ENCODE measurements at regions of chr20 and their contacts with region 1.

Region 1: DNA sequence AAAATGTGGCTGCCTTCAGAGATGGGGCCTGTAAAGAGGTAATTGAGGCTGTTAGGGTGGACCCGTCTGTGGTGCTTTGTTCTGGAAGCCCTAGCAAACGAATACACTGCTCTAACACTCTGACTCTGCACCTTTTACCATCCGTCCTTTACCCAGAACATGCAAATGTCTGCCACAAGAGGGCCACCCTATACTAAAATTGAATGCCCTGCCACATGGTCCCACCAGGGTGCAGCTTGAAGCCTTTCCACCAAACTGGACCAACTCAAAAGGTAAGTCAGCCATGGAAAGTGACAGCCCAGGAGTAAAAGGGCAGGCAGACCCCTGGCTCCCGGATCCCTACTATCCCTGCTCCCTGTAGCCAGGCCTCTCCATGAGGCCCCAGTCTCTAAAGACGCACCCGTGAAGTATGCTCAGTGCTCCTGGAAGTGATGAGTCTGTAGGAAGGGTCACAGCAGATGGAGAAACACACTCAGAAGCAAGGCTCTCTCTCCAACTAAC is 5.8 kb upstream of the BFSP1 start:
- DNase-seq: peak; percentile 83
- H3K4me3 Mint-ChIP-seq: no peak overlapping the region
- H3K27ac Mint-ChIP-seq: no peak overlapping the region
- H3K4me1 Mint-ChIP-seq: peaks cover 20% of the 10 kb centered on the region
- H3K27me3 Mint-ChIP-seq: no peaks in the 10 kb centered on the region
- CTCF ChIP-seq: peak; percentile 84

Region 2: GRCh38 chr20:17558154-17558940 is 21.4 kb after region 1 on chr20:
- CTCF ChIA-PET with region 1: interaction called, 55 read pairs
- POLR2A ChIA-PET with region 1: interaction called, 214 read pairs
- intact Hi-C with region 1: loop called (anchors 1 kb)
- DNase-seq: peak; percentile 89
- H3K4me3 Mint-ChIP-seq: peak overlapping the region; percentile 64
- H3K27ac Mint-ChIP-seq: peak overlapping the region; percentile 97
- H3K4me1 Mint-ChIP-seq: peaks cover 36% of the 10 kb centered on the region
- H3K27me3 Mint-ChIP-seq: no peaks in the 10 kb centered on the region
- CTCF ChIP-seq: no peak

Region 3: GRCh38 chr20:17611540-17612286 is 74.7 kb after region 1 on chr20:
- CTCF ChIA-PET with region 1: interaction called, 43 read pairs
- POLR2A ChIA-PET with region 1: interaction called, 15 read pairs
- intact Hi-C with region 1: loop called (anchors 1 kb)
- DNase-seq: peak; percentile 68
- H3K4me3 Mint-ChIP-seq: no peak overlapping the region
- H3K27ac Mint-ChIP-seq: peak overlapping the region; percentile 93
- H3K4me1 Mint-ChIP-seq: peaks cover 7% of the 10 kb centered on the region
- H3K27me3 Mint-ChIP-seq: no peaks in the 10 kb centered on the region
- CTCF ChIP-seq: no peak